K562 (cell line): ENCODE measurements at regions of chr17 and their contacts with region 1.

Region 1: GRCh38 chr17:11899537-11899942 is 97.7 kb downstream of the ZNF18 start:
- DNase-seq: peak; percentile 12 to 17 (median 12)
- ATAC-seq: peak; percentile 55
- H3K4me3 ChIP-seq: no peak overlapping the region
- H3K27ac ChIP-seq: no peak overlapping the region
- H3K4me1 ChIP-seq: no peaks in the 10 kb centered on the region; a peak in 2 of 5 replicates
- H3K27me3 ChIP-seq: no peaks in the 10 kb centered on the region
- CTCF ChIP-seq: peak; percentile 32 to 48 (median 34); a peak in 4 of 6 replicates
- EP300 ChIP-seq: no peak
- POLR2A ChIP-seq: no peak
- RAD21 ChIP-seq: peak in 1 of 2 experiments; percentile 51; a peak in 2 of 4 replicates

Region 2: GRCh38 chr17:11823862-11824261 is 75.7 kb before region 1 on chr17:
- CTCF ChIA-PET with region 1: no interaction called
- POLR2A ChIA-PET with region 1: no interaction called
- in situ Hi-C with region 1: no loop called
- intact Hi-C with region 1: no loop called
- DNase-seq: no peak
- ATAC-seq: no peak
- H3K4me3 ChIP-seq: no peak overlapping the region
- H3K27ac ChIP-seq: no peak overlapping the region
- H3K4me1 ChIP-seq: no peaks in the 10 kb centered on the region
- H3K27me3 ChIP-seq: peaks cover 0 to 7% of the 10 kb centered on the region in 2 experiments; a peak in 2 of 5 replicates
- CTCF ChIP-seq: no peak
- EP300 ChIP-seq: no peak
- POLR2A ChIP-seq: no peak
- RAD21 ChIP-seq: no peak

Region 3: DNA sequence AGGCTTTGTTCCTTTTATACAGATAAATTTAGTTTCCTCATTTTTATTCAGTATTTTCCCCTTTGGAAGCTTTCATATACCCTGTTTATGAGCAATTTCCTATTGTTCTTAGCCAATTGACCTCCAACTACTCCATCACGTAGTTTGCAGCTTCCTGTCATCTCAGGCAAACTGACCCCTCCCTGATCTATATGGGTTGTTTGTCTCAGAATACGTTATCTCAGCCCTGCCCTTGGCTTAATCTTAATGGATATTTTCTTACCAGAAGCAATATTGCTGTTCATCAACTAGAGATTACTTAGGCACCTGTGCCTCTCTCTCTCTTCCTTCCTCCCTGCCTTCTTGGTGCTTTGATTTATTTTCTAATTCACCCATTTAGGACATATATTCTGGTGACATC is 16.6 kb after region 1 on chr17:
- CTCF ChIA-PET with region 1: no interaction called
- POLR2A ChIA-PET with region 1: no interaction called
- in situ Hi-C with region 1: no loop called
- intact Hi-C with region 1: no loop called
- DNase-seq: no peak
- ATAC-seq: no peak
- H3K4me3 ChIP-seq: no peak overlapping the region
- H3K27ac ChIP-seq: no peak overlapping the region
- H3K4me1 ChIP-seq: no peaks in the 10 kb centered on the region
- H3K27me3 ChIP-seq: no peaks in the 10 kb centered on the region; a peak in 1 of 5 replicates
- CTCF ChIP-seq: no peak
- EP300 ChIP-seq: no peak
- POLR2A ChIP-seq: no peak
- RAD21 ChIP-seq: no peak

Region 4: DNA sequence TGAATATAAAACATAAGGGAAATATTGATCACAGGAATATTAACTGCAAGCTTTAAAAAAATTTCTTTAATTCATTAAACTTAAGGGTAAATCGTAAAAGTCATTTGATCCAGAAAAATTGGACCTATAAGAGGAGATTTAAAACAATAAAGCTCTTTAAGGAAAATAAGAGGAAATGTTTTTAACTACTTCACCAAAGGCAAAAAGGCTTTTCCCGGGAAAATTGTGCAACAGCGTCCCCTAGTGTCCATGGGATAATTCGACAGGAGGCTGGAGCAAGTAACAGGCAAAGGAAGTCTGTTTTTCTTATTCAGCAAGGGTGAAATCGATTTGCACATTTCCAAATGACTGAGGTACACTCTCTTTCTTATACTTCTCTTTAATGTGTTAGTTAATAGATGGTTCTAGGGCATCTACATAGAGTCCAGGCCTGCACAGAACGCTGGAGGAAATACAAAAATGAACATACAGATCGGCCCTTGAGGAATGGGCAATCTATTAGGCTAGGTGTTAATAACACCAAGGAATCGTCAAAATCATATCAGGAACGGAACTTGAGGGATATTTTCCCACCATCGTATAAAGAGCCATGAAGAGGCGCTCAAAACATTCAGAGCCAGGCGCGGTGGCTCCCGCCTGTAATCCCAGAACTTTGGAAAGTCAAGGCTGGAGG is 36.3 kb after region 1 on chr17:
- CTCF ChIA-PET with region 1: no interaction called
- POLR2A ChIA-PET with region 1: no interaction called
- in situ Hi-C with region 1: no loop called
- intact Hi-C with region 1: loop called (anchors 2 kb)
- DNase-seq: peak; percentile 30 to 74 (median 50)
- ATAC-seq: peak; percentile 59
- H3K4me3 ChIP-seq: no peak overlapping the region
- H3K27ac ChIP-seq: no peak overlapping the region
- H3K4me1 ChIP-seq: no peaks in the 10 kb centered on the region; a peak in 1 of 5 replicates
- H3K27me3 ChIP-seq: peaks cover 0 to 27% of the 10 kb centered on the region in 2 experiments; a peak in 2 of 5 replicates
- CTCF ChIP-seq: peak; percentile 73 to 91 (median 83)
- EP300 ChIP-seq: no peak
- POLR2A ChIP-seq: no peak
- RAD21 ChIP-seq: peak; percentile 72 to 89

Region 5: DNA sequence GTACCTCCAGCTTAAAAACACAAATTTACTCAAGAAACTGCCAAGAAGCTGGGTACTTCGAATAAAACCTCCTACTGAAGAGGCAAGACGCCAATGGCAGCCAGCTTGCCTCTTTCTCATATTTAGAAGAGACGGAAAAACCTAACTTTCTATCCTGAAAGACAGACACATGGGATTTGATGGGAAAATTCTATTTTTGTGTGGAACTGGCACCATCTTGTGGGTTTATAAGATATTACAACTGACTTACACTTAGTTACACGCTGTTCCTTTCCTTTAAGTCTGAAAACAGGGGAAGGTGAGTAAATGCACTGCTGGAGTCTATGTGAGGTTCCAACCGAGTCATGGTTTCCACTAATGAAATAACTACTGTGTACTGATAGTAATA is 87.4 kb after region 1 on chr17:
- CTCF ChIA-PET with region 1: no interaction called
- POLR2A ChIA-PET with region 1: no interaction called
- in situ Hi-C with region 1: no loop called
- intact Hi-C with region 1: loop called (anchors 10 kb)
- DNase-seq: peak; percentile 9 to 41 (median 13)
- ATAC-seq: peak; percentile 49
- H3K4me3 ChIP-seq: no peak overlapping the region
- H3K27ac ChIP-seq: no peak overlapping the region
- H3K4me1 ChIP-seq: no peaks in the 10 kb centered on the region
- H3K27me3 ChIP-seq: no peaks in the 10 kb centered on the region
- CTCF ChIP-seq: peak; percentile 17 to 54 (median 46); a peak in 4 of 6 replicates
- EP300 ChIP-seq: no peak
- POLR2A ChIP-seq: no peak
- RAD21 ChIP-seq: peak in 1 of 2 experiments; percentile 64; a peak in 3 of 4 replicates